Activated B cell treated with CpG ODN at 0.5 μM for 24 hours (primary cell): ENCODE measurements at regions of chr17 and their contacts with region 1.

Region 1: DNA sequence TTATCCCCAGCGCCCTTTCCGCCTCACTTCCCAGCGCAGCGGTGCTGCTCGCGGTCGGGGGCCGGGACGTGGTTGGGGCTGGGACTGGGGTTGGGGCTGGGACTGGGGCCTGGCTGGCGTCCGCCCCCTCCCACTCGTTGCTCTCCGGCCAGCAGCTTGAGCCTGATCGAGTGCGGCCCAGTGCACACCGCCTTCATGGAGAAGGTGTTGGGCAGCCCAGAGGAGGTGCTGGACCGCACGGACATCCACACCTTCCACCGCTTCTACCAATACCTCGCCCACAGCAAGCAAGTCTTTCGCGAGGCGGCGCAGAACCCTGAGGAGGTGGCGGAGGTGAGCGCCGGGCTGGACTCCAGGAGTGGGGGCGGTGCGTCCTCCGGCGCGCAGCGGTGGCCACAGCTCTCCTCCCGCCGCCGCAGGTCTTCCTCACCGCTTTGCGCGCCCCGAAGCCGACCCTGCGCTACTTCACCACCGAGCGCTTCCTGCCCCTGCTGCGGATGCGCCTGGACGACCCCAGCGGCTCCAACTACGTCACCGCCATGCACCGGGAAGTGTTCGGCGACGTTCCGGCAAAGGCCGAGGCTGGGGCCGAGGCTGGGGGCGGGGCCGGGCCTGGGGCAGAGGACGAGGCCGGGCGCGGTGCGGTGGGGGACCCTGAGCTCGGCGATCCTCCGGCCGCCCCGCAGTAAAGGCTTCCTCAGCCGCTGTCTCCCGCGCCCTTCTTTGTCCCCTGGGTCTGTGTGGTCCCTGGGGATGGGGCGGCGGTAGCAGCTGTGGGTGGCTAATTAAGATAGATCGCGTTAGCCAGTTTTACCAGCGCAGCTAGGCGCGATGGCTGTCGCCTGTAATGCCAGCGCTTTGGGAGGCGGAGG is 1.8 kb downstream of the HSD17B1 start:
- DNase-seq: peak; percentile 88
- ATAC-seq: peak; percentile 89
- H3K4me3 Mint-ChIP-seq: peak overlapping the region; percentile 93
- H3K27ac Mint-ChIP-seq: peak overlapping the region; percentile 93
- H3K4me1 Mint-ChIP-seq: peaks cover 27% of the 10 kb centered on the region
- H3K27me3 Mint-ChIP-seq: no peaks in the 10 kb centered on the region
- CTCF ChIP-seq: no peak

Region 2: DNA sequence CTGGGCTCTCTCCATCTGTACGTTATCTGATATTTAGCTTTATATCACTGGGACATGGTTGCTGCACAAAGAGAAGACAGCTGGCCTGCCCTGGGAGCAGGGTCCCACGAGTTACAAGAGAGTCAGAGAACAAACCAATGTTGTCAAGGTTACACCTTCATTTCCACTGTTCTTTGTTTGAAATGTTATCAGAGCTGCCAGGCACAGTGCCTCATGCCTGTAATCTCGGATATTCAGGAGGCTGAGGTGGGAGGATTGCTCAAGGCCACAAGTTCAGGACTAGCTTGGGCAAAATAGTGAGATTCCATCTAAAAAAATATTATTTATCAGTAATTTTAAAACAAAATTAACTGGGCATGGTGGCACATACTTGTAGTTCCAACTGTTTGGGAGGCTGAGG is 61.2 kb before region 1 on chr17:
- CTCF ChIA-PET with region 1: no interaction called
- POLR2A ChIA-PET with region 1: no interaction called
- intact Hi-C with region 1: no loop called
- DNase-seq: no peak
- ATAC-seq: no peak
- H3K4me3 Mint-ChIP-seq: no peak overlapping the region
- H3K27ac Mint-ChIP-seq: no peak overlapping the region
- H3K4me1 Mint-ChIP-seq: peaks cover 8% of the 10 kb centered on the region
- H3K27me3 Mint-ChIP-seq: no peaks in the 10 kb centered on the region
- CTCF ChIP-seq: no peak

Region 3: GRCh38 chr17:42527273-42527703 is 27.2 kb before region 1 on chr17:
- CTCF ChIA-PET with region 1: no interaction called
- POLR2A ChIA-PET with region 1: interaction called, 16 read pairs
- intact Hi-C with region 1: no loop called
- DNase-seq: peak; percentile 42
- ATAC-seq: peak; percentile 76
- H3K4me3 Mint-ChIP-seq: no peak overlapping the region
- H3K27ac Mint-ChIP-seq: no peak overlapping the region
- H3K4me1 Mint-ChIP-seq: peaks cover 31% of the 10 kb centered on the region
- H3K27me3 Mint-ChIP-seq: no peaks in the 10 kb centered on the region
- CTCF ChIP-seq: peak; percentile 38

Region 4: DNA sequence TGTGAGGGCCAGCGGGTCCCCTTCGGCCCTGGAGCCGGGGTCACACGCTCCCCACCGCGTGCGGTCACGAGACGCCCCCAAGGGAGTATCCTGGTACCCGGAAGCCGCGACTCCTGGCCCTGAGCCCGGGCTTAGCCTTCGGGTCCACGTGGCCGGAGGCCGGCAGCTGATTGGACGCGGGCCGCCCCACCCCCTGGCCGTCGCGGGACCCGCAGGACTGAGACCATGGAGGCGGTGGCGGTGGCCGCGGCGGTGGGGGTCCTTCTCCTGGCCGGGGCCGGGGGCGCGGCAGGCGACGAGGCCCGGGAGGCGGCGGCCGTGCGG is 18.5 kb before region 1 on chr17 and contains the start of gene NAGLU:
- CTCF ChIA-PET with region 1: no interaction called
- POLR2A ChIA-PET with region 1: interaction called, 26 read pairs
- intact Hi-C with region 1: loop called (anchors 1 kb)
- DNase-seq: peak; percentile 95
- ATAC-seq: peak; percentile 94
- H3K4me3 Mint-ChIP-seq: peak within 1 kb of the TSS; percentile 89
- H3K27ac Mint-ChIP-seq: peak within 1 kb of the TSS; percentile 83
- H3K4me1 Mint-ChIP-seq: peaks cover 34% of the 10 kb centered on the region
- H3K27me3 Mint-ChIP-seq: no peaks in the 10 kb centered on the region
- CTCF ChIP-seq: no peak
- total RNA-seq, gene NAGLU: 27.8 and 33.9 TPM in 2 replicates

Region 5: GRCh38 chr17:42566883-42567573 is 12.5 kb after region 1 on chr17 and contains the start of gene MLX:
- CTCF ChIA-PET with region 1: no interaction called
- POLR2A ChIA-PET with region 1: interaction called, 33 read pairs
- intact Hi-C with region 1: loop called (anchors 1 kb)
- DNase-seq: peak; percentile 90
- ATAC-seq: peak; percentile 83
- H3K4me3 Mint-ChIP-seq: peak within 1 kb of the TSS; percentile 98
- H3K27ac Mint-ChIP-seq: peak within 1 kb of the TSS; percentile 95
- H3K4me1 Mint-ChIP-seq: peaks cover 35% of the 10 kb centered on the region
- H3K27me3 Mint-ChIP-seq: no peaks in the 10 kb centered on the region
- CTCF ChIP-seq: no peak
- total RNA-seq, gene MLX: 53.4 and 59.7 TPM in 2 replicates

Region 6: DNA sequence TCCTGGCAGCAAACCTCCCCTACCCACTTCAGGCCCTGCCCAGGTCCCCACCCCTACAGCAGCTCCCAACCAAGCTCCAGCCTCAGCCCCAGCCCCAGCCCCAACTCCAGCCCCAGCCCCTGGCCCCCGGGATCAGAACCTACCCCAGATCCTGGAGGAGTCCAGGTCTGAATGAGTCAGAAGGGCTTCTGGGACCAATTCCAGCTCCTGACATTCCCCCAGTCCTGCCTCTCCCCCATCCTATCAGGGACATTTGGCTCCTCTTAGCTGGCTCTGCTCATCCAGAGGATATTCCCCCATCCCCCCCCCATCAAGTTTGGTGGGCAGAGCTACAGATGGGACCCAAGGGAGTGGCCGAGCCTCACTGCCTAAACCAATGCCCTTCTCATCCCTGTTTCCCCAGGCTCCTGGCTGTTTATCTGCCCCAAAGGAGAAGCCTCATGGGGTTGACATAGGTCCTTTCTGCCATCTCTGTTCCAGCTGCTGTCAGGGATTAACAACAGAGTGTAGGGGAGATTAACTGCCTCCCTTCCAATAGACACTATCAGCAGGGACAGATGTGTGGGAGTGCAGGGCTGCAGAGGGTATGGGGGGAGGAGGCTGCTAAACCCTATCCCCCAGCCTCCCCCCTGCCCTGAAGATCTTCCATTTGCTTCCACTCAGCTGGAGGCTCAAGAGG is 144.4 kb after region 1 on chr17:
- CTCF ChIA-PET with region 1: no interaction called
- POLR2A ChIA-PET with region 1: interaction called, 10 read pairs
- intact Hi-C with region 1: no loop called
- DNase-seq: no peak
- ATAC-seq: no peak
- H3K4me3 Mint-ChIP-seq: no peak overlapping the region
- H3K27ac Mint-ChIP-seq: no peak overlapping the region
- H3K4me1 Mint-ChIP-seq: peaks cover 18% of the 10 kb centered on the region
- H3K27me3 Mint-ChIP-seq: no peaks in the 10 kb centered on the region
- CTCF ChIP-seq: no peak